ENCODE measurements at regions of chr10 and their contacts with region 1.

Region 1: GRCh38 chr10:92689663-92690210 is at the start of gene HHEX:
- DNase-seq: peak; percentile 76
- ATAC-seq: peak; percentile 94
- H3K4me3 ChIP-seq: peak within 1 kb of the TSS; percentile 95
- H3K27ac ChIP-seq: peak within 1 kb of the TSS; percentile 82
- H3K4me1 ChIP-seq: peaks cover 12% of the 10 kb centered on the region
- H3K27me3 ChIP-seq: no peaks in the 10 kb centered on the region
- CTCF ChIP-seq: no peak
- POLR2A ChIP-seq: peak; percentile 63
- RAD21 ChIP-seq: no peak
- total RNA-seq, gene HHEX: 2.3 and 4.4 TPM in 2 replicates

Region 2: GRCh38 chr10:91172348-91172747 is 1517.4 kb before region 1 on chr10:
- CTCF ChIA-PET with region 1: no interaction called
- POLR2A ChIA-PET with region 1: no interaction called
- dilution Hi-C with region 1: no loop called
- in situ Hi-C with region 1: no loop called
- intact Hi-C with region 1: no loop called
- DNase-seq: no peak
- ATAC-seq: no peak
- H3K4me3 ChIP-seq: no peak overlapping the region
- H3K27ac ChIP-seq: no peak overlapping the region
- H3K4me1 ChIP-seq: no peaks in the 10 kb centered on the region
- H3K27me3 ChIP-seq: no peaks in the 10 kb centered on the region
- CTCF ChIP-seq: no peak
- POLR2A ChIP-seq: no peak
- RAD21 ChIP-seq: no peak

Region 3: GRCh38 chr10:92627845-92628480 is 61.8 kb before region 1 on chr10:
- CTCF ChIA-PET with region 1: no interaction called
- POLR2A ChIA-PET with region 1: no interaction called
- dilution Hi-C with region 1: no loop called
- in situ Hi-C with region 1: no loop called
- intact Hi-C with region 1: no loop called
- DNase-seq: no peak
- ATAC-seq: no peak; the same call in 1 of the 2 replicates
- H3K4me3 ChIP-seq: no peak overlapping the region
- H3K27ac ChIP-seq: no peak overlapping the region
- H3K4me1 ChIP-seq: no peaks in the 10 kb centered on the region
- H3K27me3 ChIP-seq: no peaks in the 10 kb centered on the region
- CTCF ChIP-seq: no peak
- POLR2A ChIP-seq: no peak
- RAD21 ChIP-seq: peak; percentile 5; the same call in 1 of the 2 replicates

Region 4: GRCh38 chr10:92822060-92822634 is 132.4 kb after region 1 on chr10:
- CTCF ChIA-PET with region 1: interaction called, 3 read pairs
- POLR2A ChIA-PET with region 1: interaction called, 4 read pairs
- dilution Hi-C with region 1: no loop called
- in situ Hi-C with region 1: no loop called
- intact Hi-C with region 1: loop called (anchors 5 kb)
- DNase-seq: peak; percentile 95
- ATAC-seq: peak; percentile 92
- H3K4me3 ChIP-seq: no peak overlapping the region
- H3K27ac ChIP-seq: peak overlapping the region; percentile 96
- H3K4me1 ChIP-seq: peaks cover 9% of the 10 kb centered on the region
- H3K27me3 ChIP-seq: no peaks in the 10 kb centered on the region
- CTCF ChIP-seq: no peak
- POLR2A ChIP-seq: no peak
- RAD21 ChIP-seq: no peak

Region 5: GRCh38 chr10:92848441-92849233 is 158.9 kb after region 1 on chr10 and contains the start of gene EXOC6:
- CTCF ChIA-PET with region 1: interaction called, 3 read pairs
- POLR2A ChIA-PET with region 1: interaction called, 3 read pairs
- dilution Hi-C with region 1: no loop called
- in situ Hi-C with region 1: no loop called
- intact Hi-C with region 1: loop called (anchors 1 kb)
- DNase-seq: peak; percentile 74
- ATAC-seq: peak; percentile 87
- H3K4me3 ChIP-seq: peak within 1 kb of the TSS; percentile 94
- H3K27ac ChIP-seq: peak within 1 kb of the TSS; percentile 81
- H3K4me1 ChIP-seq: peaks cover 2% of the 10 kb centered on the region; the same call in 1 of the 2 replicates
- H3K27me3 ChIP-seq: no peaks in the 10 kb centered on the region
- CTCF ChIP-seq: no peak
- POLR2A ChIP-seq: peak; percentile 45; the same call in 1 of the 2 replicates
- RAD21 ChIP-seq: no peak
- total RNA-seq, gene EXOC6: 11.5 and 29.2 TPM in 2 replicates

Measured in IMR-90 (cell line).